Thyroid gland (tissue), 4 donors: ENCODE measurements at regions of chr1 and their contacts with region 1.

Region 1: GRCh38 chr1:179882243-179883039 is at the start of gene TOR1AIP1:
- DNase-seq: peak; percentile 97 to 98
- H3K4me3 ChIP-seq: peak within 1 kb of the TSS; percentile 24 to 78 (median 76)
- H3K27ac ChIP-seq: peak within 1 kb of the TSS; percentile 98 to 100 (median 100)
- H3K4me1 ChIP-seq: peaks cover 0 to 27% of the 10 kb centered on the region in 2 donors
- H3K27me3 ChIP-seq: no peaks in the 10 kb centered on the region
- CTCF ChIP-seq: peak; percentile 23 to 68 (median 58)
- POLR2A ChIP-seq: peak; percentile 56 to 98
- total RNA-seq, gene TOR1AIP1: 91.1 to 116 (median 104) TPM

Region 2: DNA sequence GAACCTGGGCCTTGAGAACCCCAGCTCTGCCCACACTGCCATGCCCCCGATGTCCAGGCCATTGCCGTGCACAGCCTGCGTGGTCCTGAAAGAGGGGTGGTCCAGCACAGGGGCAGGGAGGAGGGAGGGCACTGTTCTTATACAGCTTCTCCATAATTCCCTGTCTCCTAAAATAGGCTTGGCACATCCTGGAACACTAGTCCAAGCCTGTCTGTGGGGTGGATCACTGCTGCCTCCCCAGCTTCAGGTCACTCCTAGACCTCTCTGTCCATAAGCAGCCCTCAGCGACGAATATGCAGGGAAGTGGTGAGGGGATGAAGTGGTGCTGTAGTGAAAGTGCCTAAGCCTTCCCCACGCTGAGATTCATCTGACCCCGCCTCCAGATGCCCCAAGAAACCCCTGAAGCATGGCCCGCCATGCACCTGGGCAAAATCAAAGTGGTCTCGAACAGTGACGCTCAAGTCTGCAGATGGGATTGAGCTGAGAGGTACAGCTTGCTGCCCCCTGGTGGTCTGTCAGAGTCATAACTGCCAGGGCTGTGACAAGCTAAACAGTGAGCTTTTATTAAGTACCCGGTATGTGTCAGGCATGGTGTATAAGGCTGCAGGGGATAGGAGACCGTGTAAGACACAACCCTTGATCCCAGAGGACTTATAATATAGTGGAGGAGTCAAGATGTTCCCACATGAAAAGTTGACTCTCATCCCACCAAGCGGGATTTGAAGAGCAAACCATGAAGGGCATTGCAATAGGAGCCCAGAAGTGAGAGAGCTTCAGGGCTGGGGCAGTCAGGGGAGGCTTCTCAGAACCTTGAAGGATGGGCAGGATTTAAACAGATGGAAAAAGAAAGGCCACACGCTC is 72.7 kb before region 1 on chr1:
- intact Hi-C with region 1: loop called (anchors 10 kb)
- DNase-seq: peak; percentile 61 to 71
- H3K4me3 ChIP-seq: no peak overlapping the region
- H3K27ac ChIP-seq: no peak overlapping the region
- H3K4me1 ChIP-seq: peaks cover 3 to 8% of the 10 kb centered on the region in 2 donors
- H3K27me3 ChIP-seq: no peaks in the 10 kb centered on the region
- CTCF ChIP-seq: peak; percentile 77 to 93 (median 90)
- POLR2A ChIP-seq: no peak

Region 3: GRCh38 chr1:179954493-179955297 is 72.3 kb after region 1 on chr1 and contains the start of gene CEP350:
- intact Hi-C with region 1: loop called (anchors 5 kb)
- DNase-seq: peak; percentile 98 to 99
- H3K4me3 ChIP-seq: peak within 1 kb of the TSS; percentile 87 to 97 (median 88)
- H3K27ac ChIP-seq: peak within 1 kb of the TSS; percentile 84 to 97 (median 94)
- H3K4me1 ChIP-seq: peaks cover 7 to 32% of the 10 kb centered on the region in 2 donors
- H3K27me3 ChIP-seq: no peaks in the 10 kb centered on the region
- CTCF ChIP-seq: no peak
- POLR2A ChIP-seq: peak; percentile 35 to 96
- total RNA-seq, gene CEP350: 58.3 to 78.1 (median 65.2) TPM

Region 4: DNA sequence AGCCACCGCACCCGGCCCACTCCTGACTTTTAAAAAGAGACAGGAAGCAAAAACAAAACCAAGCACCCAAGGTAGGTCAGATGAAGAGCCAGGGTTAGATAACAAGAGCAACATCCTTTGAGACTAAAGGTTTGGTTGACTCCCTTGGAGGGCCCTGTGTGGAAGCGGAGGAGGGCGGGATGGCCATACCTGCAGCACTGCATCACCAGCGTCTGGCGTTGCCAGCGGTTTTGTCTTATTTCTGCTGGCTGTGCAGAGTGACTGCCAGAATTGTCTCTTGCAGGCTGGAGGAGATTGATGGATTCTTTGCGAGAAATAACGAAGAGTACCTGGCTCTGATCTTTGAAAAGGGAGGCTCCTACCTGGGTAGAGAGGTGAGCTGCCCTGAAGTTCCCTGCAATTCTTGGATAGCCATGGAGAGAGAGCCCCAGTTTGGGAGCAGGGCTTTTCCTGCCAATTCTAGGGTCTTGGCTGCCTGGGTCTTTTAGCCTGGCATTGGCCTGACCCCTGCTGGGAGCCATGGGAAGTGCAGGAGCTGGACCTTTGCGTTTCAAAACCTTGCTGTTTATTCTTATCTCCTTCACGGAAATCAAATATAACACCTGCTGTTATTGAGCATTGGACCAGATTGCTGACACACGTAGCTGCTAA is 296.2 kb after region 1 on chr1:
- intact Hi-C with region 1: loop called (anchors 10 kb)
- DNase-seq: peak; percentile 51 to 66
- H3K4me3 ChIP-seq: no peak overlapping the region
- H3K27ac ChIP-seq: no peak overlapping the region
- H3K4me1 ChIP-seq: peaks cover 7 to 11% of the 10 kb centered on the region in 2 donors
- H3K27me3 ChIP-seq: no peaks in the 10 kb centered on the region
- CTCF ChIP-seq: peak; percentile 75 to 95 (median 82)
- POLR2A ChIP-seq: no peak